ENCODE measurements at regions of chr2 and their contacts with region 1.

Region 1: GRCh38 chr2:201071479-201072200 is at the starts of genes HYCC2 and NDUFB3:
- DNase-seq: peak; percentile 96
- H3K4me3 ChIP-seq: peak within 1 kb of the TSS; percentile 94 to 99 (median 94)
- H3K27ac ChIP-seq: peak within 1 kb of the TSS; percentile 94
- H3K4me1 ChIP-seq: peaks cover 34% of the 10 kb centered on the region
- H3K27me3 ChIP-seq: no peaks in the 10 kb centered on the region
- CTCF ChIP-seq: no peak
- POLR2A ChIP-seq: peak; percentile 38
- total RNA-seq, gene HYCC2: 20.3 and 21.2 TPM in 2 replicates
- total RNA-seq, gene NDUFB3: 96.7 and 101 TPM in 2 replicates

Region 2: GRCh38 chr2:200901459-200902072 is 170.1 kb before region 1 on chr2:
- CTCF ChIA-PET with region 1: interaction called, 87 read pairs
- POLR2A ChIA-PET with region 1: no interaction called
- dilution Hi-C with region 1: no loop called
- intact Hi-C with region 1: loop called (anchors 1 kb)
- DNase-seq: peak; percentile 91
- H3K4me3 ChIP-seq: no peak overlapping the region
- H3K27ac ChIP-seq: no peak overlapping the region
- H3K4me1 ChIP-seq: no peaks in the 10 kb centered on the region
- H3K27me3 ChIP-seq: no peaks in the 10 kb centered on the region
- CTCF ChIP-seq: peak; percentile 74 to 75
- POLR2A ChIP-seq: no peak

Region 3: GRCh38 chr2:200963124-200963917 is 108.3 kb before region 1 on chr2 and contains the start of gene ORC2:
- CTCF ChIA-PET with region 1: interaction called, 56 read pairs
- POLR2A ChIA-PET with region 1: no interaction called
- dilution Hi-C with region 1: no loop called
- intact Hi-C with region 1: loop called (anchors 1 kb)
- DNase-seq: peak; percentile 95
- H3K4me3 ChIP-seq: peak within 1 kb of the TSS; percentile 30 to 79 (median 61)
- H3K27ac ChIP-seq: peak within 1 kb of the TSS; percentile 71
- H3K4me1 ChIP-seq: peaks cover 24% of the 10 kb centered on the region
- H3K27me3 ChIP-seq: no peaks in the 10 kb centered on the region
- CTCF ChIP-seq: peak; percentile 66 to 75
- POLR2A ChIP-seq: peak; percentile 69
- total RNA-seq, gene ORC2: 34.0 and 45.4 TPM in 2 replicates

Region 4: DNA sequence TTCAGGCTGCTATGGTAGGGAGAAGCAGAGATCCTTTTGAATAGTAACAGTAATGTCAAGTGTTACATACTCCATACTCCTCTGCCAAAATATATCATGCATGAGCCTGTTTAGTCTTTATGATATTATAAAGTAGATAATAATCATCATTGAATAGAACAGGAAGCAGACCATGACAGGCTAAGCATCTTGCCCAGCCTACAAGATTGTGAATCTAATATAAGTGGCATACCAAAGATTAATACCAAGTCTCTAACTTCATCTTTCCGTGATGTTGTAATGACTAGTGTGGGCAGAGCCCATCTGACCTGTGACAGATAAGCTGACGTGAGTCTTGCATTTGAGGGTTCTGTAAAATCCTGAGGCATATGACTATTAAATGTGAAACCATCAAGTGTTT is 13.2 kb after region 1 on chr2:
- CTCF ChIA-PET with region 1: interaction called, 10 read pairs
- POLR2A ChIA-PET with region 1: no interaction called
- dilution Hi-C with region 1: no loop called
- intact Hi-C with region 1: no loop called
- DNase-seq: no peak
- H3K4me3 ChIP-seq: no peak overlapping the region
- H3K27ac ChIP-seq: no peak overlapping the region
- H3K4me1 ChIP-seq: no peaks in the 10 kb centered on the region
- H3K27me3 ChIP-seq: no peaks in the 10 kb centered on the region
- CTCF ChIP-seq: no peak
- POLR2A ChIP-seq: no peak

Region 5: DNA sequence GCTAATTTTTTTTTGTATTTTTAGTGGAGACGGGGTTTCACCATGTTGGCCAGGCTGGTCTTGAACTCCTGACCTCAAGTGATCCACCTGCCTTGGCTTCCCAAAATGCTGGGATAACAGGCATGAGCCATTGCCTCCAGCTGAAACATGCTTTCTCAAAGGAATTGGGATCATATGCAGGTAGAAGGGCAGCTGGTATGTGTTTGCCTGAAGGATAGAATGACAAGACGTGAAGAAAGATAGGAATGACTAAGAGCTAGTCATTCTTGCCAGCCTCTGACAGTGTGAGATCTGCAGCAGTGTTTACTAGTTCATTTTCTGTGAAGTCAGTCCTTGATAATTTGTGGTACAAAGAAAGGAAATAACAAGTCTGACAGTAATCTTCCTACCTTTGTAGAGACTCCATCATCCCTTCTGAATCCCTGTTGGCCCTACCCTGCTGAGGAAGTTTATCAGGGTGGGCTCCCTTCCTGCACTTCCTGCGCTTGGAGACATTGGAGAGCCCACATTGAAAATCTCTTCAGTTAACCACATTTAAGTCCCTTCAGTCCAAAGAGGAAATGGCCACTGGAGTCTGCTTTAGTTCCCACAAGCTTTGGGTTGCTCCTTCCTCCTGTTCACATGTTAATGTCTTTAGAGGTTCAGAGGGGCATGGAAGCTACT is 59.0 kb after region 1 on chr2:
- CTCF ChIA-PET with region 1: no interaction called
- POLR2A ChIA-PET with region 1: interaction called, 3 read pairs
- dilution Hi-C with region 1: no loop called
- intact Hi-C with region 1: loop called (anchors 2 kb)
- DNase-seq: peak; percentile 98
- H3K4me3 ChIP-seq: peak overlapping the region in 2 of 3 experiments; percentile 8 to 53
- H3K27ac ChIP-seq: peak overlapping the region; percentile 99
- H3K4me1 ChIP-seq: peaks cover 81% of the 10 kb centered on the region
- H3K27me3 ChIP-seq: no peaks in the 10 kb centered on the region
- CTCF ChIP-seq: no peak
- POLR2A ChIP-seq: peak; percentile 85

Region 6: GRCh38 chr2:201182650-201183364 is 111.2 kb after region 1 on chr2 and contains the start of gene CASP10:
- CTCF ChIA-PET with region 1: interaction called, 21 read pairs
- POLR2A ChIA-PET with region 1: no interaction called
- dilution Hi-C with region 1: no loop called
- intact Hi-C with region 1: no loop called
- DNase-seq: peak; percentile 95
- H3K4me3 ChIP-seq: peak within 1 kb of the TSS; percentile 59 to 96 (median 85)
- H3K27ac ChIP-seq: peak within 1 kb of the TSS; percentile 77
- H3K4me1 ChIP-seq: peaks cover 18% of the 10 kb centered on the region
- H3K27me3 ChIP-seq: no peaks in the 10 kb centered on the region
- CTCF ChIP-seq: peak; percentile 51 to 65
- POLR2A ChIP-seq: peak; percentile 91
- total RNA-seq, gene CASP10: 31.1 and 37.6 TPM in 2 replicates

Measured in endothelial cell of umbilical vein (primary cell).